Pancreas (tissue), 10 donors: ENCODE measurements at regions of chr1 and their contacts with region 1.

Region 1: DNA sequence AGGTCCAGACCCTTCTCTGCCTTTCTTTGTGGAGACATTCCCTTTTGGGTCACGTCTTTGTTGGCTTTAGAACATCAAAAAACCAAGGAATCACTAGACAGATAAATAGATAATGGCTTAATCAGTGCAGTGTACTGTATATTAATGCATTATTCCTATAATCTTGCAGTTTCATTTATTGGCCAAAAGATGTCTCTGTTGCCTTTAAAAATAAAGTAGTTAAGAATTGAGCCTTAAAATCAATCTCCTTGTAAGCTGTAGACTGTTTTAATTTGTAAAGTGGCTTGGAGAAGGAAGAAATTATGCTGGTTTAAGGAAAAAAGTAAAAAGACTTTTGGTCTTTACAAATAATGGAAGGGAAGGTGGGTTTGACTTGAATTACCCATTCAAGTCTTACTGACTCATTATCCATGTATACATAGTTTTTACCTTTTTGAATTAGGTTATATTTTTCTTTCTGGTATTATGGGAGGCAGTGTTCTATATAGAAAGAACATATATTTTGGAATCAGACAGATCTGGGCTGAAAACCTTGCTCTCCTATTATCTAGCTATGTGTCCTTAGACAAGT is 84.6 kb downstream of the VPS13D start:
- DNase-seq: no peak
- ATAC-seq: peak; percentile 55 to 94 (median 88)
- H3K4me3 ChIP-seq: no peak overlapping the region
- H3K27ac ChIP-seq: no peak overlapping the region
- H3K4me1 ChIP-seq: peaks cover 0 to 6% (median 0%) of the 10 kb centered on the region in 3 donors
- H3K27me3 ChIP-seq: no peaks in the 10 kb centered on the region
- CTCF ChIP-seq: peak in 2 of 4 donors; percentile 16 to 30

Region 2: DNA sequence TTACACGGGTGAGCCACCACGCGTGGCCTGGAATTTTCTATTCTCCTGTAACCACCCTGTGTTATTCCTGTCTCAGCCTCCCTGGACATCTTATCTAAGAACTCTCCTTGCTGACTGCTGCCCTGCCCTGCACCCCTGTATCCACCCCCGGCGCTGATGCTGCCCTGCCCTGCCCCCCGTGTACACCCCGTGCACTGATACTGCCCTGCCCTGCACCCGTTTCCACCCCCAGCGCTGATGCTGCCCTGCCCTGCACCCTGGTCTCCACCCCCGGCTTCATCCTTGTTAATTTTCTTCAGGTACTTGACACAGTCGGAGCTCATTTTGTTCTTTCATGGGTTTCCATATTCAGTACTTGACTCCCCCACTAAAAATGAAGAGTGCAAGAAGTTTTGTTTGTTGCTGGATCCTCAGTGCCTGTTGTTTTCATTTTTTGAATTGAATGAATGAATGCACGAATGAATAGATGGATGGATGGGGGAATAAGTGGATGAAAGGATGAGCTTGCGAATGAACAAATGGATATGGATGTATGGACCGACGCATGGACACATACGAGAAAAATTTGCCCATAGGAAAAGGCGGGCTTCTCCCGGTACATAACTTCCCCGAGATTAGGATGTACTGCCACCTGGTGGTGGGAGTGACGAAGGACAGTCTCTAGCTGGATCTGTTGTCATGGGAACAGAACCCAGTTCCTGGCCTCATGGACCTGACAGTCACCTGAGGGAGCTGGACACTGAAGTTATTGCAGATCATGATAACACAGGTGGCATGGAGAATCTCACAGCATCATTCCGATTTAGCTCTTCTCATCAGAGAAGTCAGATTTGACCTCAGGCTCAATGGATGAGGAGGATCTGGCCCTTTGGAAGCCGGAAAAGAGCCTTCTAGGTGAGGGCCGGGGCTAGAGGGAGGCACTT is 344.4 kb after region 1 on chr1:
- intact Hi-C with region 1: loop called in 2 of 3 experiments (anchors 5 kb)
- DNase-seq: peak; percentile 52 to 82 (median 76)
- ATAC-seq: peak; percentile 78 to 98 (median 96)
- H3K4me3 ChIP-seq: no peak overlapping the region
- H3K27ac ChIP-seq: no peak overlapping the region
- H3K4me1 ChIP-seq: no peaks in the 10 kb centered on the region
- H3K27me3 ChIP-seq: no peaks in the 10 kb centered on the region
- CTCF ChIP-seq: peak; percentile 80 to 96 (median 86)